Caco-2 (cell line): ENCODE measurements at regions of chr11 and their contacts with region 1.

Region 1: GRCh38 chr11:11787305-11788062 is 54.3 kb upstream of the USP47 start:
- DNase-seq: peak; percentile 69 to 78
- H3K4me3 ChIP-seq: no peak overlapping the region
- H3K4me3 Mint-ChIP-seq: no peak overlapping the region
- H3K27ac Mint-ChIP-seq: no peak overlapping the region
- H3K4me1 ChIP-seq: no peaks in the 10 kb centered on the region
- H3K4me1 Mint-ChIP-seq: no peaks in the 10 kb centered on the region
- H3K27me3 ChIP-seq: no peaks in the 10 kb centered on the region
- H3K27me3 Mint-ChIP-seq: peaks cover 9% of the 10 kb centered on the region
- CTCF ChIP-seq: peak; percentile 76 to 85

Region 2: DNA sequence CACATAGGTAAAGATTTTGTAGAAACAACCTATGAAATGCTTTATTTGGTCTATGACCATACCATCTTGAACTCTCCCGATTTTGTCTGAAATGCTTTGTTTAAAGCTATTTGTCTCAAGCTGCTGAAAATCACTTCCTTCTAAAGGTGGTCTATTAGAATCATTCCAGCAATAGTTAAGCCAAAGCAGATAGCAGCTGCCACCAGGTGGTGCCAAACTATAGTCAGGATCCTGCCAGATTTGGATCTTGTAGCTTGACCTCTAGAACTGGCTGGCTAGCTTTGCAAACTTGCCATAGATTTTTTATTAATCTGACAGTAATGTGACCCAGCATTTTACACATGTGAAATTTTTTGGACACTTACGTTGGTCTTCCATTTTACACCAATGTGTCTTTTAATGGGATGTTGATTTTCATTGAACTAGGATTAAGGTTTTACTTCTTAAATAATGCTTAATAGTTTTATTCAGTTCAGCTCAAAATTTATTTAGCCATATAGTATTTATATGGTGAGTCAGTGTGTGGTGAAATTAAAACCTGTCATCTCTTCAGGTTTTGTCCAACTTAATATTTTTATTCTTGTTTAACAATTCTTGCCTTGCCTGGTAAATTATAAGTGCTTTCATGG is 1016.7 kb before region 1 on chr11:
- CTCF ChIA-PET with region 1: no interaction called
- POLR2A ChIA-PET with region 1: no interaction called
- intact Hi-C with region 1: loop called (anchors 1 kb)
- DNase-seq: peak; percentile 59 to 60
- H3K4me3 ChIP-seq: no peak overlapping the region
- H3K4me3 Mint-ChIP-seq: no peak overlapping the region
- H3K27ac Mint-ChIP-seq: no peak overlapping the region
- H3K4me1 ChIP-seq: no peaks in the 10 kb centered on the region
- H3K4me1 Mint-ChIP-seq: no peaks in the 10 kb centered on the region
- H3K27me3 ChIP-seq: no peaks in the 10 kb centered on the region
- H3K27me3 Mint-ChIP-seq: no peaks in the 10 kb centered on the region
- CTCF ChIP-seq: peak; percentile 79 to 86

Region 3: GRCh38 chr11:11028017-11028692 is 759.3 kb before region 1 on chr11:
- CTCF ChIA-PET with region 1: interaction called, 15 read pairs
- POLR2A ChIA-PET with region 1: no interaction called
- intact Hi-C with region 1: loop called (anchors 2 kb)
- DNase-seq: peak; percentile 74 to 79
- H3K4me3 ChIP-seq: no peak overlapping the region
- H3K4me3 Mint-ChIP-seq: no peak overlapping the region
- H3K27ac Mint-ChIP-seq: no peak overlapping the region
- H3K4me1 ChIP-seq: no peaks in the 10 kb centered on the region
- H3K4me1 Mint-ChIP-seq: no peaks in the 10 kb centered on the region
- H3K27me3 ChIP-seq: no peaks in the 10 kb centered on the region; the same call in 1 of the 2 replicates
- H3K27me3 Mint-ChIP-seq: peaks cover 7% of the 10 kb centered on the region
- CTCF ChIP-seq: peak; percentile 83 to 90

Region 4: DNA sequence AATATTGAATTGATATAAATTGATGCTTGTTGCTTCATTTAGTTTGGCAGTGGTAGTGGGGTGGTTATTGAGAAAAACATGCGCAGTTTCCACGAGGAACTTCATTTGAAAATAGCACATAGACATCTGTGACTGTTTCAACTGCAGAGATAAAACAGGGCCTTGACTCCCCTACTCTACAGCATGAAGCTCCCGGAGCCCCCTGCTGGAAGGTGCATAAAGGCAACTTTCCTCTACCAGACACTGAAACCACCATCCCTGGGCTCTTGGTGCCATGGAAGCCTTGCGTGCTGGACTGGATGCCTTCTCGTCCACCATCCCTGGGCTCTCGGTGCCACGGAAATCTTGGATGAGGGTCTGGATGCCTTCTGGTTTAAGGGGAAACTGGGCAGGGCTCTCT is 630.3 kb before region 1 on chr11:
- CTCF ChIA-PET with region 1: no interaction called
- POLR2A ChIA-PET with region 1: no interaction called
- intact Hi-C with region 1: loop called (anchors 2 kb)
- DNase-seq: peak; percentile 53 to 68
- H3K4me3 ChIP-seq: no peak overlapping the region
- H3K4me3 Mint-ChIP-seq: no peak overlapping the region
- H3K27ac Mint-ChIP-seq: no peak overlapping the region
- H3K4me1 ChIP-seq: no peaks in the 10 kb centered on the region
- H3K4me1 Mint-ChIP-seq: no peaks in the 10 kb centered on the region
- H3K27me3 ChIP-seq: 0 out of 2 replicates have a peak, but pooled peaks cover 1% of the 10 kb centered on the region
- H3K27me3 Mint-ChIP-seq: no peaks in the 10 kb centered on the region
- CTCF ChIP-seq: peak; percentile 64 to 86

Region 5: DNA sequence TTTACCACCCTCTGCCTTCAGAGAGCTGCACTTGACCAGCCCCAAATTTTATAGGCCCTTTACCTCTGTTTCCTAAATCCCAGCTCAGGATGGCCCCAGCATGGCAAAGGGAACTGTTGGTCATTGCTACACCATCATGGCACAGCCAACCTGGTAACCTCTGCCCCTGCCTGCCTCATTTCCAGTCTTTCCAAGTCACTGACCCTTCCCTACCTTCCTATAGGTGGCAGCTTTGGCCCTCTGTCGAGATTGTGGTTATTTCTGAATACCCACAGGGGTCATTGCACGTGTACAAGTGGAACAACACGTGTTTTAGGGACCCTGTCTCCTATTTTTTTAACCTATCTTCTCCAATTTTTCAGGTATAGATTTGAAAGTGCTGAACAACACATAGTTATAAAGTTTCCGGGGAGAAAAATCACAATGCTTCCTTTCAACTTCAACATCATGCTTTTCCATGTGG is 168.5 kb before region 1 on chr11:
- CTCF ChIA-PET with region 1: interaction called, 3 read pairs
- POLR2A ChIA-PET with region 1: no interaction called
- intact Hi-C with region 1: loop called (anchors 1 kb)
- DNase-seq: peak in 1 of 2 experiments; percentile 24
- H3K4me3 ChIP-seq: no peak overlapping the region
- H3K4me3 Mint-ChIP-seq: peak overlapping the region; percentile 77
- H3K27ac Mint-ChIP-seq: no peak overlapping the region
- H3K4me1 ChIP-seq: peaks cover 18% of the 10 kb centered on the region; the same call in 1 of the 2 replicates
- H3K4me1 Mint-ChIP-seq: peaks cover 8% of the 10 kb centered on the region
- H3K27me3 ChIP-seq: peaks cover 10% of the 10 kb centered on the region
- H3K27me3 Mint-ChIP-seq: peaks cover 28% of the 10 kb centered on the region
- CTCF ChIP-seq: peak in 1 of 2 experiments; percentile 38